ENCODE measurements at regions of chr20 and their contacts with region 1.

Region 1: GRCh38 chr20:47610247-47610944 is 108.7 kb downstream of the NCOA3 start:
- DNase-seq: peak; percentile 97
- H3K4me3 Mint-ChIP-seq: peak overlapping the region; percentile 48
- H3K27ac Mint-ChIP-seq: peak overlapping the region; percentile 96
- H3K4me1 Mint-ChIP-seq: peaks cover 86% of the 10 kb centered on the region
- H3K27me3 Mint-ChIP-seq: no peaks in the 10 kb centered on the region

Region 2: DNA sequence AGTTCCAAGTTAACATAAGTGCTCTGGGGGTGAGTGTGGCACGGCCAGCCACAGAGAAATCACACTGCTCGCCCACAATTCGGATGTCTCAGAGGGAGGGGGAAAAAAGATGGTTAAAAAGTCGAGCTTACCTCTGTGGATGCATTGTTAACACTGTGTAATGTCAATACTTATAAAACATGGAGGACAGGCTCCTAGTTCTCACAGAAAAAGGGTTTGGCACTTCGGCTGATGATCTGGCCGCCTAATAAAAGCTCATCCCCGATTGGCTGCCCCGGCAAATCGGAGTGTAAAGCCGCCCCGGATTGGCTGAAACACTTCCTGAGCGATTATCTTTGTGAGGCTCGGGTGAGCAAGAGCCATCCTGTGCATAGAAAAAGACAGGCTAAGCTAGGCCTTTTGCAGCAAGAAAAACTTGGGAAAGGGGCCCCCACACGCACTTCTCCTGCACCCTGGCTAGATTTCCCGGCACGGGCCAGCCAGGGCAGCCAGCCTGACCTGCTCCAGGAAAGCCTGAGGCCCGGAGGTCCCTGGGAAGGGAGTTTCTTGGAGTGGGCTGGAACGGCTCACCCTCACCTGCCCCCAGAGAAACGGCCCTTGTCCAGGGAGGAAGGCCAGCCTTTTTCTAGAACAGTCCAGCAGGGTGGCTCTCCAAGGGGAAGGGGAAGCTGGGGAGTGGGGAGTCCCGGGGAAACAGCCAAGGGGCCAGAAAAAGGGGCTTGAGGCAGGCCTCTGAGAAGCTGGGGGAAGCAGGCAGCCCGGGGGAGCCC is 253.7 kb before region 1 on chr20 and contains the start of gene ZMYND8:
- CTCF ChIA-PET with region 1: interaction called, 3 read pairs
- intact Hi-C with region 1: loop called (anchors 5 kb)
- DNase-seq: peak; percentile 97
- H3K4me3 Mint-ChIP-seq: peak within 1 kb of the TSS; percentile 92
- H3K27ac Mint-ChIP-seq: peak within 1 kb of the TSS; percentile 99
- H3K4me1 Mint-ChIP-seq: peaks cover 52% of the 10 kb centered on the region
- H3K27me3 Mint-ChIP-seq: no peaks in the 10 kb centered on the region
- total RNA-seq, gene ZMYND8: 30.3 to 33.0 TPM

Region 3: GRCh38 chr20:47515843-47516242 is 94.6 kb before region 1 on chr20:
- CTCF ChIA-PET with region 1: no interaction called
- intact Hi-C with region 1: loop called (anchors 1 kb)
- DNase-seq: no peak
- H3K4me3 Mint-ChIP-seq: no peak overlapping the region
- H3K27ac Mint-ChIP-seq: peak overlapping the region; percentile 76
- H3K4me1 Mint-ChIP-seq: peaks cover 64% of the 10 kb centered on the region
- H3K27me3 Mint-ChIP-seq: no peaks in the 10 kb centered on the region

Region 4: GRCh38 chr20:47576516-47577033 is 33.8 kb before region 1 on chr20:
- CTCF ChIA-PET with region 1: no interaction called
- intact Hi-C with region 1: loop called (anchors 5 kb)
- DNase-seq: no peak
- H3K4me3 Mint-ChIP-seq: peak overlapping the region; percentile 56
- H3K27ac Mint-ChIP-seq: no peak overlapping the region
- H3K4me1 Mint-ChIP-seq: peaks cover 76% of the 10 kb centered on the region
- H3K27me3 Mint-ChIP-seq: no peaks in the 10 kb centered on the region

Region 5: GRCh38 chr20:47677635-47678453 is 67.4 kb after region 1 on chr20:
- CTCF ChIA-PET with region 1: no interaction called
- intact Hi-C with region 1: no loop called
- DNase-seq: peak; percentile 71
- H3K4me3 Mint-ChIP-seq: no peak overlapping the region
- H3K27ac Mint-ChIP-seq: no peak overlapping the region
- H3K4me1 Mint-ChIP-seq: no peaks in the 10 kb centered on the region
- H3K27me3 Mint-ChIP-seq: no peaks in the 10 kb centered on the region